MCF 10A (cell line): ENCODE measurements at regions of chr9 and their contacts with region 1.

Region 1: GRCh38 chr9:108786901-108787689 is 68.7 kb downstream of the ACTL7B start:
- DNase-seq: peak; percentile 93
- H3K4me3 Mint-ChIP-seq: peak overlapping the region; percentile 59
- H3K27ac Mint-ChIP-seq: peak overlapping the region; percentile 73
- H3K4me1 Mint-ChIP-seq: peaks cover 31% of the 10 kb centered on the region
- H3K27me3 Mint-ChIP-seq: no peaks in the 10 kb centered on the region
- CTCF ChIP-seq: no peak

Region 2: GRCh38 chr9:108800632-108801099 is 13.6 kb after region 1 on chr9:
- CTCF ChIA-PET with region 1: interaction called, 4 read pairs
- POLR2A ChIA-PET with region 1: interaction called, 10 read pairs
- intact Hi-C with region 1: no loop called
- DNase-seq: no peak
- H3K4me3 Mint-ChIP-seq: no peak overlapping the region
- H3K27ac Mint-ChIP-seq: no peak overlapping the region
- H3K4me1 Mint-ChIP-seq: no peaks in the 10 kb centered on the region
- H3K27me3 Mint-ChIP-seq: no peaks in the 10 kb centered on the region
- CTCF ChIP-seq: no peak

Region 3: GRCh38 chr9:108834959-108835696 is 48.0 kb after region 1 on chr9:
- CTCF ChIA-PET with region 1: interaction called, 3 read pairs
- POLR2A ChIA-PET with region 1: interaction called, 15 read pairs
- intact Hi-C with region 1: no loop called
- DNase-seq: peak; percentile 18
- H3K4me3 Mint-ChIP-seq: no peak overlapping the region
- H3K27ac Mint-ChIP-seq: no peak overlapping the region
- H3K4me1 Mint-ChIP-seq: peaks cover 36% of the 10 kb centered on the region
- H3K27me3 Mint-ChIP-seq: no peaks in the 10 kb centered on the region
- CTCF ChIP-seq: no peak